ENCODE measurements at regions of chr10 and their contacts with region 1.

Region 1: GRCh38 chr10:92880233-92880861 is 32.0 kb downstream of the EXOC6 start:
- DNase-seq: peak in 4 of 5 donors; percentile 28 to 38 (median 32)
- H3K4me3 ChIP-seq: no peak overlapping the region
- H3K4me3 Mint-ChIP-seq: no peak overlapping the region
- H3K27ac ChIP-seq: no peak overlapping the region
- H3K27ac Mint-ChIP-seq: no peak overlapping the region
- H3K4me1 ChIP-seq: peaks cover 23% of the 10 kb centered on the region
- H3K4me1 Mint-ChIP-seq: peaks cover 21 to 31% (median 24%) of the 10 kb centered on the region in 4 donors
- H3K27me3 ChIP-seq: no peaks in the 10 kb centered on the region
- H3K27me3 Mint-ChIP-seq: no peaks in the 10 kb centered on the region

Region 2: DNA sequence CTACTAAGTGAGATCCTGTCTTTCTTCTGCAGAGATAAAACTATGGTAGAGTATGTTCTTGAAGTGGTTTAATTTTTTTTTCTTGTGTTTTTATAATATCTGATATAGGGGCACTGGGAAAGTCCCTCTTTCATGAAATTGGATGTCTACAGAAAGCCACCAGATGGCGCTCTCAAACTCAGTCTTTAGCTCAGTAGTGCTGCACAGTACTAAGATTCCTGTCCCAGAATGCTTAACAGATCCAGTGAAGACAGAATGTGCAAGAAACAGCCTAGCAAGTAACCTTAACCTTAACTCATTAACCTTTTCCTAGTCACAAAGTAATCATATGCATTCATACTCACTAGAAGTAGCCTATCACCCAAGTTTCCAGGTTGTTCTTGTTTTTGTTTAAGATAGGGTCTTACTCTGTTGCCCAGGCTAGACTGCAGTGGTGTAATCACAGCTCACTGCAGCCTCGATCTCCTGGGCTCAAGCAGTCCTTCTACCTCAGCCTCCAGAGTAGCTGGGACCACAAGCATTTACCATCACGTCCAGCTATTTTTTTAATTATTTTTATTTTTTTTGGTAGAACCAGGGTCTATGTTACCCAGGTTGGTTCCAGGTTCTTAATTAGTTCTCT is 363.2 kb before region 1 on chr10:
- CTCF ChIA-PET with region 1: interaction called, 4 read pairs
- POLR2A ChIA-PET with region 1: no interaction called
- intact Hi-C with region 1: loop called (anchors 1 kb)
- DNase-seq: peak; percentile 68 to 75 (median 72)
- H3K4me3 ChIP-seq: no peak overlapping the region
- H3K4me3 Mint-ChIP-seq: no peak overlapping the region
- H3K27ac ChIP-seq: no peak overlapping the region
- H3K27ac Mint-ChIP-seq: peak overlapping the region in 5 of 7 donors; percentile 31 to 56 (median 53)
- H3K4me1 ChIP-seq: peaks cover 8% of the 10 kb centered on the region
- H3K4me1 Mint-ChIP-seq: peaks cover 6 to 8% (median 7%) of the 10 kb centered on the region in 4 donors
- H3K27me3 ChIP-seq: no peaks in the 10 kb centered on the region
- H3K27me3 Mint-ChIP-seq: no peaks in the 10 kb centered on the region

Region 3: GRCh38 chr10:92573798-92574547 is 306.4 kb before region 1 on chr10 and contains the start of gene IDE:
- CTCF ChIA-PET with region 1: no interaction called
- POLR2A ChIA-PET with region 1: no interaction called
- intact Hi-C with region 1: no loop called
- DNase-seq: peak; percentile 77 to 83 (median 81)
- H3K4me3 ChIP-seq: peak within 1 kb of the TSS; percentile 50 to 86
- H3K4me3 Mint-ChIP-seq: peak within 1 kb of the TSS; percentile 88 to 95 (median 92)
- H3K27ac ChIP-seq: peak within 1 kb of the TSS; percentile 85
- H3K27ac Mint-ChIP-seq: peak within 1 kb of the TSS; percentile 90 to 96 (median 93)
- H3K4me1 ChIP-seq: peaks cover 26% of the 10 kb centered on the region
- H3K4me1 Mint-ChIP-seq: peaks cover 27 to 46% (median 36%) of the 10 kb centered on the region in 4 donors
- H3K27me3 ChIP-seq: no peaks in the 10 kb centered on the region
- H3K27me3 Mint-ChIP-seq: no peaks in the 10 kb centered on the region
- total RNA-seq, gene IDE: 38.4 to 40.2 TPM

Region 4: GRCh38 chr10:92729886-92730285 is 150.5 kb before region 1 on chr10:
- CTCF ChIA-PET with region 1: no interaction called
- POLR2A ChIA-PET with region 1: no interaction called
- intact Hi-C with region 1: no loop called
- DNase-seq: no peak
- H3K4me3 ChIP-seq: no peak overlapping the region
- H3K4me3 Mint-ChIP-seq: no peak overlapping the region
- H3K27ac ChIP-seq: no peak overlapping the region
- H3K27ac Mint-ChIP-seq: no peak overlapping the region
- H3K4me1 ChIP-seq: no peaks in the 10 kb centered on the region
- H3K4me1 Mint-ChIP-seq: no peaks in the 10 kb centered on the region
- H3K27me3 ChIP-seq: no peaks in the 10 kb centered on the region
- H3K27me3 Mint-ChIP-seq: peaks cover 7 to 9% of the 10 kb centered on the region in 2 donors

Region 5: DNA sequence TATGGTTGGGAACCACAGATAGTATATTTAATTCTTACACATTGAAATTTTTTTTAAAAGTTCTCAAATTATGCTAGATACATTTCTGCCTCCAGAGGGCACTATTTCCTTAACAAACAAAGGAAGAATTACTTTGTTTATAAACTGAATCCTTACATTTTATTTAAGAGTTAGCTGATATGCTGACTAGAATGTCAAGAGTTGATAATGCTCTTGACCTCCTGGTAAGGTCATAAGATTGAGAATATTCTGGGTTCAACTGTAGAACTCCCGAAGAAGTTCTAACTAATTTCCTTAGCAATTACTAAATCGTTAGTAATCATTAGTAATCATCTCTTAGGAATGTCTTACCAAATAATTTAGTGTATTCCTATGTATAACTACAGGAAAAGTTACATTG is 85.0 kb after region 1 on chr10:
- CTCF ChIA-PET with region 1: interaction called, 3 read pairs
- POLR2A ChIA-PET with region 1: no interaction called
- intact Hi-C with region 1: loop called (anchors 1 kb)
- DNase-seq: peak in 4 of 5 donors; percentile 14 to 26 (median 18)
- H3K4me3 ChIP-seq: no peak overlapping the region
- H3K4me3 Mint-ChIP-seq: no peak overlapping the region
- H3K27ac ChIP-seq: no peak overlapping the region
- H3K27ac Mint-ChIP-seq: no peak overlapping the region
- H3K4me1 ChIP-seq: no peaks in the 10 kb centered on the region
- H3K4me1 Mint-ChIP-seq: no peaks in the 10 kb centered on the region
- H3K27me3 ChIP-seq: no peaks in the 10 kb centered on the region
- H3K27me3 Mint-ChIP-seq: no peaks in the 10 kb centered on the region

Region 6: GRCh38 chr10:93080350-93081046 is 200.2 kb after region 1 on chr10:
- CTCF ChIA-PET with region 1: interaction called, 4 read pairs
- POLR2A ChIA-PET with region 1: no interaction called
- intact Hi-C with region 1: loop called (anchors 1 kb)
- DNase-seq: peak in 4 of 5 donors; percentile 43 to 47 (median 46)
- H3K4me3 ChIP-seq: no peak overlapping the region
- H3K4me3 Mint-ChIP-seq: peak overlapping the region in 4 of 8 donors; percentile 33 to 71 (median 62)
- H3K27ac ChIP-seq: no peak overlapping the region
- H3K27ac Mint-ChIP-seq: no peak overlapping the region
- H3K4me1 ChIP-seq: peaks cover 4% of the 10 kb centered on the region
- H3K4me1 Mint-ChIP-seq: peaks cover 2 to 10% (median 7%) of the 10 kb centered on the region in 4 donors
- H3K27me3 ChIP-seq: no peaks in the 10 kb centered on the region
- H3K27me3 Mint-ChIP-seq: peaks cover 17 to 39% of the 10 kb centered on the region in 2 donors

Region 7: GRCh38 chr10:93352638-93353383 is 472.5 kb after region 1 on chr10:
- CTCF ChIA-PET with region 1: interaction called, 11 read pairs
- POLR2A ChIA-PET with region 1: no interaction called
- intact Hi-C with region 1: loop called (anchors 1 kb)
- DNase-seq: peak in 4 of 5 donors; percentile 43 to 46 (median 45)
- H3K4me3 ChIP-seq: no peak overlapping the region
- H3K4me3 Mint-ChIP-seq: no peak overlapping the region
- H3K27ac ChIP-seq: no peak overlapping the region
- H3K27ac Mint-ChIP-seq: no peak overlapping the region
- H3K4me1 ChIP-seq: no peaks in the 10 kb centered on the region
- H3K4me1 Mint-ChIP-seq: peaks cover 0 to 3% (median 0%) of the 10 kb centered on the region in 4 donors
- H3K27me3 ChIP-seq: no peaks in the 10 kb centered on the region
- H3K27me3 Mint-ChIP-seq: peaks cover 7 to 10% of the 10 kb centered on the region in 2 donors

Region 8: GRCh38 chr10:93420091-93420490 is 539.7 kb after region 1 on chr10:
- CTCF ChIA-PET with region 1: no interaction called
- POLR2A ChIA-PET with region 1: no interaction called
- intact Hi-C with region 1: no loop called
- DNase-seq: no peak
- H3K4me3 ChIP-seq: no peak overlapping the region
- H3K4me3 Mint-ChIP-seq: no peak overlapping the region
- H3K27ac ChIP-seq: no peak overlapping the region
- H3K27ac Mint-ChIP-seq: no peak overlapping the region
- H3K4me1 ChIP-seq: peaks cover 3% of the 10 kb centered on the region
- H3K4me1 Mint-ChIP-seq: peaks cover 10 to 18% (median 11%) of the 10 kb centered on the region in 4 donors
- H3K27me3 ChIP-seq: no peaks in the 10 kb centered on the region
- H3K27me3 Mint-ChIP-seq: no peaks in the 10 kb centered on the region